H1 (cell line): ENCODE measurements at regions of chr6 and their contacts with region 1.

Region 1: GRCh38 chr6:3251462-3252314 is 7.1 kb upstream of the PSMG4 start:
- DNase-seq: peak in 1 of 2 experiments; percentile 95
- H3K4me3 ChIP-seq: no peak overlapping the region
- H3K27ac ChIP-seq: no peak overlapping the region
- H3K4me1 ChIP-seq: peaks cover 3 to 9% (median 7%) of the 10 kb centered on the region in 4 experiments; a peak in 6 of 7 replicates
- H3K27me3 ChIP-seq: peaks cover 0 to 3% (median 1%) of the 10 kb centered on the region in 4 experiments; a peak in 2 of 7 replicates
- CTCF ChIP-seq: peak; percentile 91 to 97 (median 94)
- EP300 ChIP-seq: no peak
- POLR2A ChIP-seq: no peak
- RAD21 ChIP-seq: peak; percentile 81 to 89

Region 2: GRCh38 chr6:3124667-3125066 is 127.0 kb before region 1 on chr6:
- CTCF ChIA-PET with region 1: interaction called, 41 read pairs
- POLR2A ChIA-PET with region 1: interaction called, 6 read pairs
- DNase-seq: no peak
- H3K4me3 ChIP-seq: no peak overlapping the region
- H3K27ac ChIP-seq: no peak overlapping the region
- H3K4me1 ChIP-seq: no peaks in the 10 kb centered on the region; a peak in 2 of 7 replicates
- H3K27me3 ChIP-seq: no peaks in the 10 kb centered on the region
- CTCF ChIP-seq: no peak
- EP300 ChIP-seq: no peak
- POLR2A ChIP-seq: no peak
- RAD21 ChIP-seq: no peak

Region 3: DNA sequence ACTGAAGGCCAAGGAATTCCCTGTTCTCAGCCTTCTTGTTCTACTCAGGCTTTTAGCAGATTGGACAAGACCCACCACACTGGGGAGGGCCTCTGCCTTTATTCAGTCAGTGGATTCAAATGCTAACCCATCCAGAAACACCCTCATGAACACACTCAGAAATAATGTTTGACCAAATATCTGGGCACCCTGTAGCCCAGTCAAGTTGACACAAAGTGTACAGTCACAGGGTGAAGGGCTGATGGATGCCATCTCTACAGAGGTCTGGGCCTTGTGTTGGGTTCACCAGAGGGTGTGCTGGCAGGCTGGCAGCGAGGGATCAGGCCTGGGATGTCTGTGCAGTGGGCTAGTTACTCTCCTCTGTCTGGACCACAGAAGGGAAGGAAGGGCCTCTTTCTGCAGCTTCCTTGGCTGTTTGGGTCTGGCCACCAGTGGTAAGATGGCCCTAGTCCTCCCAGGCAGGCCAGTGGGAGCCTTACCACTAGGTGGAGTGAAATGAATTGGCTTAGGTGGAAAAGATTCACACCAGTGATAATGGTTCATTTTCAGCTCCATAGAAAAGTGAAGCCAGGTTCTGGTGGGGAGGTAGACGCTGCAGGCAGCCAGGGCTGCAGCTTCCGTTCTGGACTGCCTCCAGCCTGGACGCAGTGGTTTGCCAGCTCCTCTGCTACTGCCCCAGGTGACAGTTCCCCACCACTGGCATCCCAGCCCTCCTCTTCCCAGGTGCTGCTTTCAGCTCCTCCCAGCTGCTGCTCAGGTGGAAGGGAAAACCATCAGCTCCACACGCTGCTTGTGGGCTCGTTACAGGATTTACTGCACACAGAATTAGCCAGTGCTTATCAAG is 103.6 kb before region 1 on chr6:
- CTCF ChIA-PET with region 1: interaction called, 28 read pairs
- POLR2A ChIA-PET with region 1: interaction called, 4 read pairs
- DNase-seq: no peak
- H3K4me3 ChIP-seq: no peak overlapping the region
- H3K27ac ChIP-seq: no peak overlapping the region
- H3K4me1 ChIP-seq: peaks cover 2 to 7% (median 3%) of the 10 kb centered on the region in 4 experiments; a peak in 6 of 7 replicates
- H3K27me3 ChIP-seq: no peaks in the 10 kb centered on the region
- CTCF ChIP-seq: peak in 2 of 3 experiments; percentile 13 to 26; a peak in 2 of 4 replicates
- EP300 ChIP-seq: no peak
- POLR2A ChIP-seq: no peak
- RAD21 ChIP-seq: peak; percentile 23 to 30; a peak in 3 of 4 replicates

Region 4: GRCh38 chr6:3176562-3177355 is 74.9 kb before region 1 on chr6:
- CTCF ChIA-PET with region 1: interaction called, 13 read pairs
- POLR2A ChIA-PET with region 1: no interaction called
- DNase-seq: no peak
- H3K4me3 ChIP-seq: no peak overlapping the region
- H3K27ac ChIP-seq: no peak overlapping the region
- H3K4me1 ChIP-seq: peaks cover 0 to 3% (median 0%) of the 10 kb centered on the region in 4 experiments; a peak in 1 of 7 replicates
- H3K27me3 ChIP-seq: no peaks in the 10 kb centered on the region
- CTCF ChIP-seq: no peak
- EP300 ChIP-seq: no peak
- POLR2A ChIP-seq: no peak
- RAD21 ChIP-seq: no peak

Region 5: GRCh38 chr6:3231247-3232016 is 20.3 kb before region 1 on chr6:
- CTCF ChIA-PET with region 1: interaction called, 263 read pairs
- POLR2A ChIA-PET with region 1: interaction called, 122 read pairs
- DNase-seq: peak in 1 of 2 experiments; percentile 83
- H3K4me3 ChIP-seq: peak overlapping the region; percentile 71 to 99 (median 86)
- H3K27ac ChIP-seq: no peak overlapping the region; the same call in 1 of the 2 replicates
- H3K4me1 ChIP-seq: peaks cover 5 to 17% (median 11%) of the 10 kb centered on the region in 4 experiments; a peak in 6 of 7 replicates
- H3K27me3 ChIP-seq: peaks cover 0 to 23% (median 19%) of the 10 kb centered on the region in 4 experiments; a peak in 6 of 7 replicates
- CTCF ChIP-seq: no peak
- EP300 ChIP-seq: peak in 1 of 2 experiments; percentile 28; a peak in 1 of 3 replicates
- POLR2A ChIP-seq: peak in 1 of 2 experiments; percentile 47; a peak in 1 of 3 replicates
- RAD21 ChIP-seq: no peak

Region 6: DNA sequence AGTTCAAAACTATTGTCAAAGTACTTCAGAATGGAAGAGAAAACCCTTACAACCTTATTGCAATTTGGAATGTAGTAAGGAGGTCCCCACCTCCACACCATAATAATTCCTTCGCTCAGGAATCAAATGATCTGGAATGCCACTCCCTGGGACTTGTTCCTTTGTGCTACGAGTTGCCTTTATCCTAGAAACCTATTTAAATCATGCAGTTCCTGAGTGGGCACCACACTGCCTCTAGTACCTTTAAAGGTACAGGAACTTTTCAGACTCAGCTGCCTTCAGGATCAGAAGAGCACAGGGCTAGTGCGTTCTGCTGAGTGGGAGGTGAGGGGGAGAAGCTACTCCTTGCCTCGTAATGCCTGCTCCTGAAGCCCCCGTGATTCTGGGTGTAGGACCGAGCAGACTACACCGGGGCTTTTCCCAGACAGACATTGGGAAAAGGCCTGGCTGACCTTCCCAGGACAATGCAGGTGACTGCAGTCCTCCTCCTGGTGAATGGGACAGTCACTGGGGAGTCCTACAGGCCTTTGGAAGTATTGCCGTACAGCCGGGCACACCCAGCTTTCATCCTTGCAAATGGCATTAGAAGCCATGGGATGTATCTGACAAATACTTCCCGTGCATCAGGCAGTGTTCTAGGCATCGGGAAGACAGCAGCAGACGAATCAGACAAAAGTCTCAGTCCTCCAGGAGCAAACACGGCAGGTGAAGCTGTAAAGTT is 12.4 kb before region 1 on chr6:
- CTCF ChIA-PET with region 1: interaction called, 263 read pairs
- POLR2A ChIA-PET with region 1: interaction called, 12 read pairs
- DNase-seq: no peak
- H3K4me3 ChIP-seq: no peak overlapping the region
- H3K27ac ChIP-seq: no peak overlapping the region
- H3K4me1 ChIP-seq: peaks cover 0 to 5% (median 0%) of the 10 kb centered on the region in 4 experiments; a peak in 3 of 7 replicates
- H3K27me3 ChIP-seq: no peaks in the 10 kb centered on the region
- CTCF ChIP-seq: peak; percentile 43 to 68 (median 57)
- EP300 ChIP-seq: no peak
- POLR2A ChIP-seq: no peak
- RAD21 ChIP-seq: peak; percentile 47 to 67

Region 7: DNA sequence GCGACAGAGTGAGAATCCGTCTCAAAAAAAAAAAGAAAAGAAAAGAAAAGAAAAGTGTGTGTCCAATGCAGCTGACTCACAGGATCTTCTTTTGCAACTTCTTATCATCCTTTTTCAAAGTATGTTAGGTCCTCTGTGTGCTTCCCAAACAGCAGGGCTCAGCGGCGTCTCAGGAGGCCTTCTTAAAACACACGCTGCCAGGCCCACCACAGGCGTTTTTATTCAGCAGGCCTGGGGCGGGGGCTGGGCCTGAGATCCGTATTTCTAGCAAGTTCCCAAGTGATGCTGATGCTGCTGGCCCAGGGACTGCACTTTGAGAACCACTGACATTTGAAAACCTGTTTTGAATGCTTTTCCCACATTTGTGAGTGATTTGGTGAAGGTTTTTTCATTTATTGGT is 64.2 kb after region 1 on chr6:
- CTCF ChIA-PET with region 1: no interaction called
- POLR2A ChIA-PET with region 1: no interaction called
- DNase-seq: no peak
- H3K4me3 ChIP-seq: no peak overlapping the region
- H3K27ac ChIP-seq: no peak overlapping the region
- H3K4me1 ChIP-seq: peaks cover 0 to 5% (median 0%) of the 10 kb centered on the region in 4 experiments; a peak in 3 of 7 replicates
- H3K27me3 ChIP-seq: no peaks in the 10 kb centered on the region
- CTCF ChIP-seq: no peak
- EP300 ChIP-seq: no peak
- POLR2A ChIP-seq: no peak
- RAD21 ChIP-seq: no peak